ENCODE measurements at regions of chr12 and their contacts with region 1.

Region 1: GRCh38 chr12:52082988-52083637 is 3.6 kb downstream of the SMIM41 start:
- DNase-seq: no peak
- H3K4me3 ChIP-seq: no peak overlapping the region
- H3K27ac ChIP-seq: peak overlapping the region in 1 of 2 donors; percentile 13
- H3K4me1 ChIP-seq: peaks cover 0 to 25% (median 11%) of the 10 kb centered on the region in 4 donors
- H3K27me3 ChIP-seq: peaks cover 0 to 29% of the 10 kb centered on the region in 2 donors
- CTCF ChIP-seq: peak; percentile 97 to 98

Region 2: GRCh38 chr12:51496895-51497294 is 586.2 kb before region 1 on chr12:
- intact Hi-C with region 1: no loop called
- DNase-seq: no peak
- H3K4me3 ChIP-seq: no peak overlapping the region
- H3K27ac ChIP-seq: no peak overlapping the region
- H3K4me1 ChIP-seq: no peaks in the 10 kb centered on the region
- H3K27me3 ChIP-seq: no peaks in the 10 kb centered on the region
- CTCF ChIP-seq: no peak

Region 3: DNA sequence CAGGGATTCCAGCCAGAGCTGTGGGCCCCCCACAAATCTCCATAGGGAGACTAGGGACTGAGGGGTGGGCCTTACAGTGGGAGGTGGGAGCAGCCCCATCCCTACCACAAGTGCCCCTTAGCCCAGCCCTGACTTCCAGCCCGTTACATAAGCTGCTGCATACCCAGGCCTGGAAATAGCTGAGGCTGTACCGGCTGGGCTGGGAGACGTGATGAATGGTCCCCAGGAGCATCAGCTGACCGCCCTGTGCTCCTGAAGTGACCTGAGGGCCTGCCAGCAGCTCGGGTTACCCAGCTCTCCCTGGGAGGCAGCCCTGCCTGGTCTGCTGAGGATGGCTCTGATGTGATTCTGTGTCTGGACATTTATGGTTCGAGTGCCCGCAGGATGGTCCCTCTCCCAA is 56.1 kb before region 1 on chr12:
- intact Hi-C with region 1: loop called (anchors 2 kb)
- DNase-seq: no peak
- H3K4me3 ChIP-seq: no peak overlapping the region
- H3K27ac ChIP-seq: no peak overlapping the region
- H3K4me1 ChIP-seq: peaks cover 4 to 39% (median 25%) of the 10 kb centered on the region in 4 donors
- H3K27me3 ChIP-seq: peaks cover 0 to 10% of the 10 kb centered on the region in 2 donors
- CTCF ChIP-seq: no peak

Region 4: DNA sequence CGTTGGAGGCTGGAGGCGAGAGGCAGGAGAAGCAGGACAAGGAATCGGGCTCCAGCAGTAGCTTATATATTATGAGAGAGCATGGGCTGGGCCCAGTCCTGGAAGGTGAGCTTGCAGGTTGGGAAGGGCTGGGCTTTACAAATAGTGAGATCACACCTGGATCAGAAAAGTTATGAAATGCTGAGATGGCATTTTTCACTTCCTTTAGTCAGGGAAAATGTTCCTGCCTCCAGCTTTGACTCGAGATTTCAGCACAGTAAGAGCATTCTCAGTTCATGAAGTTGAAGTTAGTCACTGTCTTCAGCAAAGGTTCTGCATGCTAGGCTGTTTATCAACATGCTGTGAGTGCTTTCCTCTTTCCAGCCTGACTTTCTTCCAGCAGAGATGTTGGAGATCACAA is 390.7 kb after region 1 on chr12 and contains the start of gene KRT6C:
- intact Hi-C with region 1: no loop called
- DNase-seq: no peak
- H3K4me3 ChIP-seq: no peak within 1 kb of the TSS
- H3K27ac ChIP-seq: no peak within 1 kb of the TSS
- H3K4me1 ChIP-seq: no peaks in the 10 kb centered on the region
- H3K27me3 ChIP-seq: no peaks in the 10 kb centered on the region
- CTCF ChIP-seq: no peak

Measured in tibial artery (tissue), 4 donors.